IMR-90 (cell line): ENCODE measurements at regions of chr9 and their contacts with region 1.

Region 1: GRCh38 chr9:136283291-136284235 is 20.3 kb downstream of the CCDC187 start:
- DNase-seq: peak; percentile 52
- ATAC-seq: peak; percentile 99
- H3K4me3 ChIP-seq: no peak overlapping the region
- H3K27ac ChIP-seq: no peak overlapping the region
- H3K4me1 ChIP-seq: no peaks in the 10 kb centered on the region
- H3K27me3 ChIP-seq: peaks cover 26% of the 10 kb centered on the region
- CTCF ChIP-seq: peak; percentile 90
- POLR2A ChIP-seq: no peak
- RAD21 ChIP-seq: peak; percentile 91

Region 2: DNA sequence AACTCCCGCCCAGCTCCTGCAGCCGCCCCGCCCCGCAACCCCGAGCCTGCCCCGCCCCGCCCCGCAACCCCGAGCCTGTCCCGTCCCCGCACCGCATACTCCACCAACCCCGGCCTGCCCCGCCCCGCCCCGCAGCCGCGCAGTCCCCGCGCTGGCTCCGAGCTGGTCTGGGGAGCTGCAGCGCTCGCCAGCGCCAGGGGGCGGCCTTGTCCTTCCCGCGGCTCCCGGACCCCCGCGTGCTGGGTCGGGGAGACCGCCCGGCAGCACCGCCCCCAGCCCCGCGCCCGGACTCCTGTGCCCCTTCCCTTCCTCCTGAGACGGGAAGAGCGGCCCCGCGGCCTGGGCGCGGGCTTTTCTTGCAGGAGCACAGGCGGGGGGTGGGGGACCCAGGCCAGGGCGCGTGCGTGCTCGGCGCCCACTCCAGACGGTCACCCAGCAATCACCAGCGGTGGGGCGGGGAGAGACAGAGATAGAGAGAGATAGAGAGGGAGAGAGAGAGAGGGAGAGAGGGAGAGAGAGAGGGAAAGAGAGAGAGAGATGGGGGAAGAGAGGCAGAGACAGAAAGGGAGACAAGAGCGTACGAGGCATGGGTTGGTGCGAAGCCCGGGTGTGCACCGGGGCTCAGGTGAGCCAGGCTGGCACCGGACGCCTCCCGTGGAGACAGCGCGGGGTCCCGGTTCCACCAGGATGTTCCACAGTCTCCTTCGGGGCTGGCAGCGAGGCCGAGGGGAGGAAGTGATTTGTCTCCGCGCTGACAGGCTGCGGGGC is 150.2 kb before region 1 on chr9:
- CTCF ChIA-PET with region 1: no interaction called
- POLR2A ChIA-PET with region 1: no interaction called
- dilution Hi-C with region 1: no loop called
- in situ Hi-C with region 1: no loop called
- intact Hi-C with region 1: loop called (anchors 1 kb)
- DNase-seq: no peak
- ATAC-seq: peak; percentile 86
- H3K4me3 ChIP-seq: peak overlapping the region; percentile 30
- H3K27ac ChIP-seq: no peak overlapping the region
- H3K4me1 ChIP-seq: no peaks in the 10 kb centered on the region
- H3K27me3 ChIP-seq: peaks cover 85% of the 10 kb centered on the region
- CTCF ChIP-seq: peak; percentile 57
- POLR2A ChIP-seq: no peak
- RAD21 ChIP-seq: peak; percentile 54

Region 3: DNA sequence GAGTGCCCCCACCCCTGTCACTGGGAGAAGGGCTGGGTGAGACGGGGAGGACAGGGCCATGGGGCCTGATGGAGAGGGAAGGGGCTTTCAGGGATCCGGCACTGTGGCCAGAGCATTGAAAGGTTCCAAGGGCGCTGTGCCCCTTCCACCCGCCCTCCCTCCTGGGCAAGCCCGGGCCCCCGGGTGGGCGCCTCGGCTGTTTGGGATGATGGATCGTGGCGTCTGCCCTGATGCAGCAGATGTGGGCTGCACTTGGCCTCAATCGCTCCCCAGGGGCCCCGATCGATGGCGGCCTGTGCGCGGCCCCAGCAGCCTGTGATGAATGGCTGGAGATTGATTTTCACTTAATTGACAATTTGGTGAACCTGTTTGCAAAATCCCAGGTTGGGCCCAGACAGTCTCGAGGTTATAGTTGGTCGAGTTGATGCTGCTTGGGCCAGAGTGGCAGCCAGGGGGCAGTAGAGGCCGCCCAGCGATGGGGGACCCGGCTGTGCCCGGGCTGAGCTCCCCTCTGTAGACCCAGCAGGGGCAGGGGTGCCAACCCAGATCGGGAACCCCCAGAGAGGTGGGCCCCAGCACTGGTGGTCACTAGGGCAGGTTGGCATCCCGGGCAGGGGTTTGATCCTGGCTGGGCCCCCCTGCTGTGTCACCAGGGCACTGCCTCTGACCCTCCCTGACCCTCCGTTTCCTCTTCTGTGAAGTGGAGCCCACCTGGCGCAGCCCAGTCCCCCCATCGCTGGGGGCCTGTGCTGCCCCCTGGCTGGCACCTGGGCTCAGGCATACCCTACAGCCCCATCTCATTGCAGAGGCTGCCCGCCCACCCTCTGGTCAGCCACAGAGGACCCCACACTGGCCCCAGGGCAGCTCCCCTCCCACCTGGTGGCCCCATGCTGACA is 113.3 kb before region 1 on chr9:
- CTCF ChIA-PET with region 1: no interaction called
- POLR2A ChIA-PET with region 1: no interaction called
- dilution Hi-C with region 1: no loop called
- in situ Hi-C with region 1: loop called (anchors 10 kb)
- intact Hi-C with region 1: loop called (anchors 1 kb)
- DNase-seq: no peak
- ATAC-seq: peak; percentile 92
- H3K4me3 ChIP-seq: no peak overlapping the region
- H3K27ac ChIP-seq: no peak overlapping the region
- H3K4me1 ChIP-seq: no peaks in the 10 kb centered on the region
- H3K27me3 ChIP-seq: peaks cover 53% of the 10 kb centered on the region
- CTCF ChIP-seq: peak; percentile 67
- POLR2A ChIP-seq: no peak
- RAD21 ChIP-seq: peak; percentile 73